SK-N-SH (cell line): ENCODE measurements at regions of chr9 and their contacts with region 1.

Region 1: GRCh38 chr9:114155263-114155972 is at the start of gene COL27A1:
- DNase-seq: peak; percentile 97
- H3K4me3 ChIP-seq: peak within 1 kb of the TSS; percentile 54 to 88
- H3K27ac ChIP-seq: peak within 1 kb of the TSS in 1 of 2 experiments; percentile 29; a peak in 1 of 4 replicates
- H3K4me1 ChIP-seq: peaks cover 5 to 8% of the 10 kb centered on the region in 2 experiments; a peak in 2 of 4 replicates
- H3K27me3 ChIP-seq: peaks cover 5% of the 10 kb centered on the region; the same call in 1 of the 2 replicates
- CTCF ChIP-seq: peak; percentile 93
- EP300 ChIP-seq: no peak
- RAD21 ChIP-seq: peak; percentile 82
- polyA plus RNA-seq, gene COL27A1: 6.8 and 8.7 TPM in 2 replicates

Region 2: DNA sequence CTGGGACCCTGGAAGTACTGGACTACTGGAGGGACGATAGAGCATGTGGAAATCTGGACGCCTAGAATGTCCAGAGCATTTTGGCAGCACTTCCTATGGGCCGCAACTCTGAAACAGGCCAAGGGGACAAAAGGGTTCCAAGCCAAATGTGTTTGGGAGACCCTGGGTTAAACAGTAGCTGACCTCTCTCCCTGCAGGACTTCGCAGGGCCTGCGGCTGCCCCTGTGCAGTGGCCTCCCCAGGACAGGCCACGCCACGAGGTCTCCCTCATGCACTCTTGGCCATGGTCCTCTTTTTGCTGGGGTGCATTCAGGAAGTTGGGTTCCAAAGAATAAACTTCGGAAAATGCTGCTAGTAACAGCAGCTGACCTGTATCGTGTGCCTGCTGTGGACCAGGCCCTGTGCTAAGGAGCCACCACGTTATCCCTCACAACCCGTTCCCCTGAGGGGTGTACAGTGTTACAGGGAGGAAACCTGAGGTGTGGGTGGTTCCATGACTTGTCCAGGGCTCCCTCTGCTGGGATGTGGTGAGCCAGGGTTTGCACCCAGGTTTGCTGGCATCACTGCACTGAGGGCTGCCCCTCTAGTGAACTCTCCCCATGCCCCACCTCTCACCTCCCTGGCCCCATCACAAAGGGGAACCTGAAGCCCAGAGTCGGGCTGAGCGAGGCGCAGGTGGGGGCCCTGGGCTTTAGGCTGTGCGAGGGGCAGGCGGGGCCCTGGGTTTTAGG is 156.7 kb before region 1 on chr9:
- CTCF ChIA-PET with region 1: no interaction called
- POLR2A ChIA-PET with region 1: no interaction called
- DNase-seq: peak; percentile 56
- H3K4me3 ChIP-seq: no peak overlapping the region
- H3K27ac ChIP-seq: no peak overlapping the region; a peak in 1 of 4 replicates
- H3K4me1 ChIP-seq: peaks cover 10 to 54% of the 10 kb centered on the region in 2 experiments; a peak in 3 of 4 replicates
- H3K27me3 ChIP-seq: no peaks in the 10 kb centered on the region
- CTCF ChIP-seq: peak; percentile 28
- EP300 ChIP-seq: no peak
- RAD21 ChIP-seq: peak; percentile 55

Region 3: DNA sequence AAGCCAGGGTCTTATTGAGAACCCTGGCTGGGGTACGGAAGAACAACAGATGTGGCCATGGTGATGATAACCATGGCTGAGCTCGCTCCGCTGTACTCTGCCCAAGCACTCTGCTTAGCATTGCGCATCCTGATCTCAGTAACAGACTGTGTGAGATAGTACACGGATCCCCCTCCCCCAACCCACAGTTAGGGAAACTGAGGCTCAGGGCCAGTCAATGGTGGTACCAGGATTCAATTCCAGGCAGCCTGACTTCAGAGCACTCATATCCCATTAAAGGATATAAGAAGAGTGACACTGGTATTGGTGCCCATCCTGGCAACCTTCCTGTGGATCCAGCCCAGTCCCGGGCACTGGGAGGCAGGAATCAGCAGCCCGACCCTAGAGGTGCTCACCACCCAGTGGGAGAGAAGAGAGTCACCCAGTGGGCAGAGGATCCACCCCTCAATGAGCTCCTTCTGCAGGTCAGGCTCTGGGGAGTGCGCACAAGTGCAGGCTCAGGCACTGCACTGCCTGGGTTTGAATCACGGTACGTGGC is 29.9 kb before region 1 on chr9:
- CTCF ChIA-PET with region 1: no interaction called
- POLR2A ChIA-PET with region 1: no interaction called
- DNase-seq: no peak
- H3K4me3 ChIP-seq: no peak overlapping the region
- H3K27ac ChIP-seq: no peak overlapping the region
- H3K4me1 ChIP-seq: no peaks in the 10 kb centered on the region; a peak in 1 of 4 replicates
- H3K27me3 ChIP-seq: peaks cover 18% of the 10 kb centered on the region; the same call in 1 of the 2 replicates
- CTCF ChIP-seq: no peak
- EP300 ChIP-seq: no peak
- RAD21 ChIP-seq: no peak

Region 4: DNA sequence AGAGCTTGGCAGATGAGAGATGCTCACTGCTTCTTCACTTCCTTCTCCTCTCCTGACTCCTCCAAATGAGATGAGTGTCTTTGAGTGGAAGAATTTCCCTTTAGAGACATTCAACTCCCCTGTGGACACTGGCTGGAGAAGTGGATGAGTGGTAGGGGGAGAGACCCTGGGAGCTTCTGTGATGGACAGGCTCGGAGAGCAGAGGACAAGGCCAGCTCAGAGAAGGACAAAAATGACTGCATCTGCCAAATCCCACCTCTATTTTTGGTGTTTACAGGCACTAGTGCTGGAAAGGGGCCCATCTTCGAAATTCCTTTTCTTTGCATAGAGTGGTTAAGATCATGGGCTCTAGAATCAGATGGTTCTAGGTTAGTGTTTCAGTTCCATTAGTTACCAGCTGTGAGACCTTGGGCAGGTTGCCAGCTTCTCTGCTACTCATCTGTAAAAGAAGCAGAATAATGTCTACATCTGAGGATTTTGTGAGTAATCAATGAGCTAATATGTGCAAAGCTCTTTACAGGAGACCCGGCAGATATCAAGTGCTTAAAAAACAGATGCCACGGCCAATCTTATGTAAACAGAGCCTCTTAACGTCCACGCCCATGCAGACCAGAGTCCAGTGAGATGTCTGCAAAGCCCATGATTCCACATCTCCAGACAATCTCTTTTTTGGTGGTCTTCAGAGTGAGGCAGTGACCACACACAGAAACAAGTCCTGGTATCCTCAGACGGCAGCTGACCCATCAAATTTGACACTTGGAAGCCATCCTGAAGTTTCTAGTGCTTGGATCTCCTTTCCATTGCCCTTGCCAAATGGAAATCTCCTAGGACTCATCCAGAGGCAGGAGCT is 13.6 kb before region 1 on chr9:
- CTCF ChIA-PET with region 1: interaction called, 26 read pairs
- POLR2A ChIA-PET with region 1: no interaction called
- DNase-seq: no peak
- H3K4me3 ChIP-seq: no peak overlapping the region
- H3K27ac ChIP-seq: no peak overlapping the region
- H3K4me1 ChIP-seq: no peaks in the 10 kb centered on the region
- H3K27me3 ChIP-seq: peaks cover 50% of the 10 kb centered on the region
- CTCF ChIP-seq: no peak
- EP300 ChIP-seq: no peak
- RAD21 ChIP-seq: no peak

Region 5: GRCh38 chr9:114186605-114187289 is 31.3 kb after region 1 on chr9:
- CTCF ChIA-PET with region 1: interaction called, 11 read pairs
- POLR2A ChIA-PET with region 1: no interaction called
- DNase-seq: peak; percentile 62
- H3K4me3 ChIP-seq: no peak overlapping the region
- H3K27ac ChIP-seq: no peak overlapping the region; a peak in 1 of 4 replicates
- H3K4me1 ChIP-seq: peaks cover 4 to 37% of the 10 kb centered on the region in 2 experiments; a peak in 1 of 4 replicates
- H3K27me3 ChIP-seq: no peaks in the 10 kb centered on the region
- CTCF ChIP-seq: no peak
- EP300 ChIP-seq: peak in 1 of 2 experiments; percentile 40; a peak in 1 of 4 replicates
- RAD21 ChIP-seq: no peak

Region 6: DNA sequence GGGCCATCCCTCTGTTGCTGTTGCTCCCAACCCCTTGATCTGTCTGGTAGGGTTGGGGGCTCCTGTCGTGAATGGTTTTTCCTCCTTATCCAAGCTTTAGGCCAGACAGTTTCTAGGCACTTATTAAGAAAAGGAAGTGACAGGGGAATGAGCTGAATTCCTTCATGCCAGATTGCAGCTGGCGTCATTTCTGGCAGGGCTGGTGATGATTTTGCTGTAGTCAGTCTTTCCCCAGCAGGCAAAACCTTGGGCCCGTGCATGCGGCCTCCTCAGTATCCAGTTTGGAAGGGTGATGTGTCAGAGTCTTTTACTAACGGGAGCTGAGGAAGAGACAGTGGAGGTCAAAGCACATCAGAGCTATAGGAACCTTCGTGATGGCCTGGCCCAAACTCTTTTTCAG is 58.8 kb after region 1 on chr9:
- CTCF ChIA-PET with region 1: interaction called, 10 read pairs
- POLR2A ChIA-PET with region 1: no interaction called
- DNase-seq: no peak
- H3K4me3 ChIP-seq: no peak overlapping the region
- H3K27ac ChIP-seq: no peak overlapping the region
- H3K4me1 ChIP-seq: peaks cover 6 to 14% of the 10 kb centered on the region in 2 experiments; a peak in 3 of 4 replicates
- H3K27me3 ChIP-seq: no peaks in the 10 kb centered on the region
- CTCF ChIP-seq: no peak
- EP300 ChIP-seq: no peak
- RAD21 ChIP-seq: no peak

Region 7: GRCh38 chr9:114233491-114234185 is 78.2 kb after region 1 on chr9:
- CTCF ChIA-PET with region 1: interaction called, 39 read pairs
- POLR2A ChIA-PET with region 1: no interaction called
- DNase-seq: no peak
- H3K4me3 ChIP-seq: no peak overlapping the region
- H3K27ac ChIP-seq: no peak overlapping the region
- H3K4me1 ChIP-seq: peaks cover 0 to 47% of the 10 kb centered on the region in 2 experiments; a peak in 2 of 4 replicates
- H3K27me3 ChIP-seq: no peaks in the 10 kb centered on the region
- CTCF ChIP-seq: no peak
- EP300 ChIP-seq: no peak
- RAD21 ChIP-seq: no peak

Region 8: DNA sequence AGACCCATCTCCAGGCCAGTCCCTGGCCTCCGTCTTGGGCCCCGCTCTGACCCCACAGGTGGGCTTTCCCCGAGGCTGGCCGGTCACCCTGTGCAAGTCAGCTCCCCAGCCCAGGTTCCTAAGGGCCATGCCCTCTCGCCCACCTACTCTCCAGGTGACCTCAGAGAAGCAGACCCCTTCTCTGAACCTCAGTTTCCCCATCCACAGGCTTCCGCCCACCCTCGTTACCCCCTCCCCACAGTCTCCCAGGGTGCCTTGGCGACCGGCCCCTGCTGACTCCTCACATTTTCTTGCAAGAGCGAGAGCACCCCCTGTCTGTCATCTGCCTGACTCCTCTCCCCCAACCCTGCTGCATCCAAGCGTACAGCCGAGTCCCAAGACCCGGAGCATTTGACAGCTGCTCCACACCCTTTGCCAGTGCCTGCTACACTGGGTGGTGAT is 116.2 kb after region 1 on chr9:
- CTCF ChIA-PET with region 1: interaction called, 186 read pairs
- POLR2A ChIA-PET with region 1: no interaction called
- DNase-seq: peak; percentile 78
- H3K4me3 ChIP-seq: no peak overlapping the region
- H3K27ac ChIP-seq: no peak overlapping the region
- H3K4me1 ChIP-seq: peaks cover 0 to 2% of the 10 kb centered on the region in 2 experiments; a peak in 1 of 4 replicates
- H3K27me3 ChIP-seq: no peaks in the 10 kb centered on the region
- CTCF ChIP-seq: peak; percentile 55
- EP300 ChIP-seq: no peak
- RAD21 ChIP-seq: peak; percentile 80

Region 9: GRCh38 chr9:114372921-114373448 is 217.6 kb after region 1 on chr9:
- CTCF ChIA-PET with region 1: no interaction called
- POLR2A ChIA-PET with region 1: no interaction called
- DNase-seq: no peak
- H3K4me3 ChIP-seq: no peak overlapping the region
- H3K27ac ChIP-seq: no peak overlapping the region
- H3K4me1 ChIP-seq: peaks cover 0 to 18% of the 10 kb centered on the region in 2 experiments; a peak in 1 of 4 replicates
- H3K27me3 ChIP-seq: no peaks in the 10 kb centered on the region
- CTCF ChIP-seq: no peak
- EP300 ChIP-seq: no peak
- RAD21 ChIP-seq: no peak